MCF 10A (cell line): ENCODE measurements at regions of chr10 and their contacts with region 1.

Region 1: GRCh38 chr10:125231116-125231812 is 70.9 kb upstream of the CTBP2 start:
- DNase-seq: peak; percentile 90
- H3K4me3 Mint-ChIP-seq: peak overlapping the region; percentile 29
- H3K27ac Mint-ChIP-seq: peak overlapping the region; percentile 83
- H3K4me1 Mint-ChIP-seq: peaks cover 14% of the 10 kb centered on the region
- H3K27me3 Mint-ChIP-seq: no peaks in the 10 kb centered on the region
- CTCF ChIP-seq: no peak

Region 2: DNA sequence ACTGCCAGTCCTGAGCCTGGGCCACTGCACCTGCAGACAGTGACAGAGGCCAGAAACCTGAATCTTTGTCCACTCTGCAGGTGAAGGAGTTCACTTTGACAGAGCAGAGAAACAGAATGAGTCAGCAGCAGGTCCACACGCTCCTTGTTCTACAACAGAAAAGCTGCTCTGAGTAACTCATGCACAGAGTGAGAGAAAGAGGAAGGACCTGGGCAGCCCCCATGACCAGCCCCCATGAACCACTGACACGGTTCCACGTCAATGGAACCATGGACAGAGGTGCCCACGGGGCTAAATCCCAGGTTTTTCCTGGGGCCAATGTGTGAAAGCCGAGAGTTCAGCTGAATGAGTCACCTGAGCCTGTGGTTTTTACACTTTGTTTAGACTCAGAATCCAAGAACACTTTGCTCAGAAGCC is 30.1 kb before region 1 on chr10:
- CTCF ChIA-PET with region 1: no interaction called
- POLR2A ChIA-PET with region 1: interaction called, 12 read pairs
- intact Hi-C with region 1: no loop called
- DNase-seq: peak; percentile 79
- H3K4me3 Mint-ChIP-seq: peak overlapping the region; percentile 36
- H3K27ac Mint-ChIP-seq: peak overlapping the region; percentile 80
- H3K4me1 Mint-ChIP-seq: peaks cover 16% of the 10 kb centered on the region
- H3K27me3 Mint-ChIP-seq: no peaks in the 10 kb centered on the region
- CTCF ChIP-seq: no peak

Region 3: DNA sequence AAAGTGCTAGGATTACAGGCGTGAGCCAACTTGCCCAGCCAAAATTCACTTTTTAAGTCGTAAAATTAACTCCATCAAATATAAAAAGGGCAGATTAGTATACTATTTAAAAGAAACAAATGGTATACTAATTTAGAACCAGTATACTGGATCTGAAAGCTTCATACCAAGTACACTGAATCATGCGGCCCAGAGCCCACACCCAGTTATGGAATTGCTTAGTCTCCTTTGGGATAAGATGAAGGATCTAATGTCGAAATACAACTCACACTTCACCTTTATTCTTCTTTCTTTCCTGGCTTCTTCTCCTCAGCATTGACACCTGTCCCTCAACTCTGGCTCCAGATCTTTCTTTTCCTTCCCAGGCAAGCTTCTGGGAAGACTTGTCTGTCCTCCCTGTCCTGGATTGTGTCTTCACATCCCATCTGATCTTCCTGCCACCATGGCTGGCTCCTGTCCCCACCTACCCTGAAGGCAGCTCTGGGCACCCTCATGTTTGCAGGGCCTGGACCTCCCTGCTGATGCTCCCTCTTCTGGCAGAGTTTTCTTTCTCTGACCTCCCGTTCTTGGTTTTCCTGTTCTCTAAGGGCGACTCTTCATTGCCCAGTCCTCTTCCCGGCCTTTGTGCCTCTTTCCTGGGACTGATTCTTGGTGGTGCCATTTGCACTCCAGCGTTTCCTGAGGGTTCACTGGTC is 13.1 kb before region 1 on chr10:
- CTCF ChIA-PET with region 1: interaction called, 4 read pairs
- POLR2A ChIA-PET with region 1: interaction called, 11 read pairs
- intact Hi-C with region 1: no loop called
- DNase-seq: peak; percentile 33
- H3K4me3 Mint-ChIP-seq: no peak overlapping the region
- H3K27ac Mint-ChIP-seq: peak overlapping the region; percentile 61
- H3K4me1 Mint-ChIP-seq: peaks cover 13% of the 10 kb centered on the region
- H3K27me3 Mint-ChIP-seq: no peaks in the 10 kb centered on the region
- CTCF ChIP-seq: no peak

Region 4: GRCh38 chr10:125343118-125343925 is 112.1 kb after region 1 on chr10:
- CTCF ChIA-PET with region 1: no interaction called
- POLR2A ChIA-PET with region 1: interaction called, 4 read pairs
- intact Hi-C with region 1: loop called (anchors 1 kb)
- DNase-seq: peak; percentile 45
- H3K4me3 Mint-ChIP-seq: no peak overlapping the region
- H3K27ac Mint-ChIP-seq: no peak overlapping the region
- H3K4me1 Mint-ChIP-seq: peaks cover 8% of the 10 kb centered on the region
- H3K27me3 Mint-ChIP-seq: no peaks in the 10 kb centered on the region
- CTCF ChIP-seq: peak; percentile 44